IMR-90 (cell line): ENCODE measurements at regions of chr1 and their contacts with region 1.

Region 1: GRCh38 chr1:30707412-30708360 is 15.7 kb downstream of the MATN1 start:
- DNase-seq: peak; percentile 56
- ATAC-seq: peak; percentile 97
- H3K4me3 ChIP-seq: no peak overlapping the region
- H3K27ac ChIP-seq: no peak overlapping the region
- H3K4me1 ChIP-seq: no peaks in the 10 kb centered on the region
- H3K27me3 ChIP-seq: peaks cover 45% of the 10 kb centered on the region
- CTCF ChIP-seq: peak; percentile 98
- POLR2A ChIP-seq: peak; percentile 68; the same call in 1 of the 2 replicates
- RAD21 ChIP-seq: peak; percentile 100

Region 2: GRCh38 chr1:28893403-28894102 is 1814.1 kb before region 1 on chr1:
- CTCF ChIA-PET with region 1: no interaction called
- POLR2A ChIA-PET with region 1: no interaction called
- dilution Hi-C with region 1: no loop called
- in situ Hi-C with region 1: loop called (anchors 10 kb)
- intact Hi-C with region 1: no loop called
- DNase-seq: peak; percentile 12
- ATAC-seq: peak; percentile 54
- H3K4me3 ChIP-seq: no peak overlapping the region
- H3K27ac ChIP-seq: no peak overlapping the region
- H3K4me1 ChIP-seq: no peaks in the 10 kb centered on the region
- H3K27me3 ChIP-seq: no peaks in the 10 kb centered on the region; the same call in 1 of the 2 replicates
- CTCF ChIP-seq: peak; percentile 43
- POLR2A ChIP-seq: no peak
- RAD21 ChIP-seq: peak; percentile 44

Region 3: DNA sequence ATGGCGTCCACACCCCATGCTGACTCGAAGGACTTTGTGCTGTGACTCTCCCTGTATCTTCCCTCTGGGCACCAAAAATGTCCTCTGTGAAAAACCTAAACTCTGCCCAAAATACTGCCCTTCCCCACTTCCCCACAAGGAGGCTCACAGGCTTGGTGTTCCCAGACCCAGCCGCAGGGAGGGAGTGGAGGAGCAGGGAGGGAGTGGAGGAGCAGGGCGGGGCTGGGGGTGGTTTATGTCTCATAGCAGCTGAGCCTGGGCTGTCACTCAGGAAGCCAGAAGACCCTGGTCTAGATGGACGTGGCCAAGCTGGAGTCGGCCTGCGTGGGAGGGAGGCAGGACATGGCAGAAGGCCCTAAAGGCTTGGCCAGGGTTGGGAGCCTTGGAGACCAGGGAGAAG is 1009.7 kb before region 1 on chr1:
- CTCF ChIA-PET with region 1: no interaction called
- POLR2A ChIA-PET with region 1: no interaction called
- dilution Hi-C with region 1: no loop called
- in situ Hi-C with region 1: loop called (anchors 10 kb)
- intact Hi-C with region 1: loop called (anchors 2 kb)
- DNase-seq: peak; percentile 59
- ATAC-seq: peak; percentile 97
- H3K4me3 ChIP-seq: no peak overlapping the region
- H3K27ac ChIP-seq: no peak overlapping the region
- H3K4me1 ChIP-seq: no peaks in the 10 kb centered on the region
- H3K27me3 ChIP-seq: no peaks in the 10 kb centered on the region; the same call in 1 of the 2 replicates
- CTCF ChIP-seq: peak; percentile 69
- POLR2A ChIP-seq: no peak
- RAD21 ChIP-seq: peak; percentile 66

Region 4: DNA sequence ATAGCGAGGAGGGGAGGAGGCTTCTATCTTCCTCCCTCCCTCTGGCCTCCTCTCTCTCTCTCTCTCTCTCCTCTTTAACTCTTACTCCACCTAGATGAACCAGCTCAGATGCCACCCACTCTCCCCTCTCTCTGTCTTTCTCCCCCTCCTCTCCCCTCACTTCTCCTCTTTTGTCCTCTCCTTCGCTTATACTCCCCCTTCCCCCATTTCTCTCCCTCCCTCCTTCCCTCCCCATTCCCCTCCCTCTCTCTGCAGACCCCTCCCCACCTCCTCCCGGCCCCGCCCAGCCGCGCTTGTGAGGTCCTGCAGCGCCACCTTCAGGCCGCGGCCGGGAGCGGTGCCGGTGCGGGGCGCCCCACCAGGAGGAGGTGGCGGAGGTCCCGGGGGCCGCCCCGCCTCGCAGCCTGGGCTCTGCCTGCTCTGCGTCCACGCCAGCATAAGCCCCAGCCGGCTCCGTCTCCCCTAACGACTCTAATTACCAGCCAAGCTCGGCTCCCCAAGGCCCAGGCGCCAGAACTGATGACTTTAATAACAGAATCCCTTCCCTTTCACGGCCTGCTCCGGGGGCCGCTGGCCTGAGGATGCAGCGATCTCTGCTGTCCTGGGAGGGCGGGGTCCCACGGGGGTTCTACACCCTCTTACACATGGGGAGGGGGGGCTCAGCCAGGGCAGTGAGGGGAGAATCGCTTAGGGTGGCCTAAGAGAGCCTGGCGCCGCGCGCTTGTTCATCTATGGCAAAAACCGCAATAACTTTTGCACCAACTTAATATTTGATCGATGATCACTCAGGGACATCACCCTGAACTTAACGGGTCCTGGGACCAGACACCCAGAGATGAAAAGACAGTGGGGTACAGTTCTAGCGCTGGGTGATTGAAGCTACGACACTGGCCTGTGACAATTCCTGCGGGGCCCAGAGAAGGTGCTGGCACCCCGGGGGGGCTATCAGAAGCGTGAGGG is 621.6 kb before region 1 on chr1:
- CTCF ChIA-PET with region 1: no interaction called
- POLR2A ChIA-PET with region 1: no interaction called
- dilution Hi-C with region 1: no loop called
- in situ Hi-C with region 1: no loop called
- intact Hi-C with region 1: loop called (anchors 10 kb)
- DNase-seq: peak; percentile 31
- ATAC-seq: peak; percentile 67
- H3K4me3 ChIP-seq: no peak overlapping the region
- H3K27ac ChIP-seq: peak overlapping the region; percentile 48; the same call in 1 of the 2 replicates
- H3K4me1 ChIP-seq: peaks cover 23% of the 10 kb centered on the region
- H3K27me3 ChIP-seq: no peaks in the 10 kb centered on the region; the same call in 1 of the 2 replicates
- CTCF ChIP-seq: peak; percentile 73
- POLR2A ChIP-seq: no peak
- RAD21 ChIP-seq: peak; percentile 74

Region 5: GRCh38 chr1:30368651-30369240 is 338.9 kb before region 1 on chr1:
- CTCF ChIA-PET with region 1: no interaction called
- POLR2A ChIA-PET with region 1: no interaction called
- dilution Hi-C with region 1: no loop called
- in situ Hi-C with region 1: no loop called
- intact Hi-C with region 1: no loop called
- DNase-seq: no peak
- ATAC-seq: no peak
- H3K4me3 ChIP-seq: no peak overlapping the region
- H3K27ac ChIP-seq: no peak overlapping the region
- H3K4me1 ChIP-seq: no peaks in the 10 kb centered on the region
- H3K27me3 ChIP-seq: no peaks in the 10 kb centered on the region
- CTCF ChIP-seq: no peak
- POLR2A ChIP-seq: no peak
- RAD21 ChIP-seq: no peak

Region 6: DNA sequence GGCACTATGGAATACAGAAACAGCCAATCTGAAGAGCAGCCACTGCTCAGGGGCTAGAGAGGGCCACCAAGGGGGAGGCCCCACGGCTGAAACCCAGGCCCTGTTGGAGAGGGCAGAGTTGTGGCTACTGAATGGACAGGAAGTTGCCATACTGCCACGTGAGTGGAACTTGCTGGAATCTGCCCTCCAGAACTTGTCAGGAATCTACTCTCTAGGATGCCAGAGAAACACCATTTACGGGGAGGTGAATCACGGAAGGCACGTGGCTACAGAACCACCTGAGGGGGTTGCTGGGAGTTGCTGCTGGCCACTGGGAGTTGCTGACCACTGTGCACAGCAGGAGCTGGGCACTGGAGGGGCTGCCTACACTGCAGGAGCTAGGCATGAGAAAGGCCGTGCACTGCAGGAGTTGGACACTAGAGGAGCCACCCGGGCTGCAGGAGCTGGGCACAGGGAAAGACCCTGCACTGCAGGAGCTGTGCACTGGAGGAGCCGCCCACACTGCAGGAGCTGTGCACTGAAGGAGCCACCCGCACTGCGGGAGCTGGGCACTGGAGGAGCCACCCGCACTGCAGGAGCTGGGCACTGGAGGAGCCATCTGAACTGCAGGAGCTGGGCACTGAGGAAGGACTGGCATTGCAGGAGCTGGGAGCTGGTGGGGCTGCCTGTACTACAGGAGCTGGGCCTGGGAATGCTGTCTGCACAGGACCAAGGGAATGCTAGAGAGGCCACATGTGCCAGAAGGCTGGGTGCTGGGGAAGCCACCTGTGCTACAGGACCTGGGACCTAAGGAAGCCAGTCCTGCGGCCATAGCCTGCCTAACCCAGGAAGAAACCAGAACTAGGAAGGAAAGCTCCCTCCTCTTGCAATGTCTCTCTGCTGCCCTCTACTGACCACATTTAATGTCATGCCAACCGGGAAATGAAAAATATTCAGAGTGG is 327.7 kb before region 1 on chr1:
- CTCF ChIA-PET with region 1: interaction called, 10 read pairs
- POLR2A ChIA-PET with region 1: no interaction called
- dilution Hi-C with region 1: no loop called
- in situ Hi-C with region 1: no loop called
- intact Hi-C with region 1: loop called (anchors 2 kb)
- DNase-seq: peak; percentile 64
- ATAC-seq: peak; percentile 93
- H3K4me3 ChIP-seq: no peak overlapping the region
- H3K27ac ChIP-seq: no peak overlapping the region
- H3K4me1 ChIP-seq: no peaks in the 10 kb centered on the region
- H3K27me3 ChIP-seq: peaks cover 3% of the 10 kb centered on the region; the same call in 1 of the 2 replicates
- CTCF ChIP-seq: peak; percentile 87
- POLR2A ChIP-seq: no peak
- RAD21 ChIP-seq: peak; percentile 66

Region 7: GRCh38 chr1:30668024-30668423 is 39.7 kb before region 1 on chr1:
- CTCF ChIA-PET with region 1: no interaction called
- POLR2A ChIA-PET with region 1: no interaction called
- dilution Hi-C with region 1: no loop called
- in situ Hi-C with region 1: no loop called
- intact Hi-C with region 1: no loop called
- DNase-seq: peak; percentile 3
- ATAC-seq: peak; percentile 30; the same call in 1 of the 2 replicates
- H3K4me3 ChIP-seq: no peak overlapping the region
- H3K27ac ChIP-seq: no peak overlapping the region
- H3K4me1 ChIP-seq: no peaks in the 10 kb centered on the region
- H3K27me3 ChIP-seq: peaks cover 17% of the 10 kb centered on the region
- CTCF ChIP-seq: no peak
- POLR2A ChIP-seq: no peak
- RAD21 ChIP-seq: no peak